Activated CD4-positive, alpha-beta T cell treated with anti-CD3 and anti-CD28 coated beads for 36 hours (primary cell): ENCODE measurements at regions of chr7 and their contacts with region 1.

Region 1: DNA sequence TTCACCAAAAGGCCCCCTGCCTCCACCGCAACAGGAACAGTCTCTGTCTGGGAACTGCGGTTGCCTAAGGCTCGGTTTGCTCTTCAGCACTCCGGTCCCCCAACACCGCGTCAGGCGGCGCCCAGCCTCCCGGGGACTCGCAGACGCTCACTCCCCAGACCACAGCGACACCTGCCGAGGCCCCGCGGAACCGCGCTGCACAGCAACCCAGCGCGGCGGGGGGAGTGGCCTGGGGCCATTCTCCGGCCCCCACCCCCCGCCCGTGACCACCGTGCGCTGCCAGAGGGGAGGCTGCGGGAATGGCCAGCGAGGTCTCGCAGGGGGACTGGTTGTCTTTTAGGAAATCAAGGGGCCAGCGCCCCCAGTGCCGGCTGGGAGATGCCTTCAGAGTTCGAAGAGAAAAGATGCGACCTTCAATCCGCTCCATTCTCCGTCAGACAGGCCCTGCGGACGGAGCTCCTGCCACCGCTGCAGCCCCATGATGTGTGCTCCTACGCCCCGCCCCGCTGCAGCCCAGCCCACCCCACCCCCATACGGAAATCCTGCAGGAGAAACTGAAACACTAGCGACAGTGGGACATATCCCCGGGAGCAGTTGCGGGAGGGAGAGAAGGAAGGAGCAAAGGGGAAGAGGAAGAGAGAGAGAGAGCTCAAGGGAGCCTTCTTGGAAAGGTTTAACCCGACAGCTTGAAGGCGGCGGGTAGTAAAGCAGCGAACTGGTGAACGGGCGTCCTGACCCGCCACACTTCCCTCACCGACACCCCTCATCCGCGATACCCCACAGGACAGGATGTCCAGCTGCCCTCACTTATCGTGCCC is 137.4 kb upstream of the CDCA7L start:
- DNase-seq: peak; percentile 91
- ATAC-seq: peak; percentile 99
- H3K4me3 Mint-ChIP-seq: peak overlapping the region; percentile 71
- H3K27ac Mint-ChIP-seq: no peak overlapping the region
- H3K4me1 Mint-ChIP-seq: peaks cover 10% of the 10 kb centered on the region
- H3K27me3 Mint-ChIP-seq: peaks cover 11% of the 10 kb centered on the region

Region 2: DNA sequence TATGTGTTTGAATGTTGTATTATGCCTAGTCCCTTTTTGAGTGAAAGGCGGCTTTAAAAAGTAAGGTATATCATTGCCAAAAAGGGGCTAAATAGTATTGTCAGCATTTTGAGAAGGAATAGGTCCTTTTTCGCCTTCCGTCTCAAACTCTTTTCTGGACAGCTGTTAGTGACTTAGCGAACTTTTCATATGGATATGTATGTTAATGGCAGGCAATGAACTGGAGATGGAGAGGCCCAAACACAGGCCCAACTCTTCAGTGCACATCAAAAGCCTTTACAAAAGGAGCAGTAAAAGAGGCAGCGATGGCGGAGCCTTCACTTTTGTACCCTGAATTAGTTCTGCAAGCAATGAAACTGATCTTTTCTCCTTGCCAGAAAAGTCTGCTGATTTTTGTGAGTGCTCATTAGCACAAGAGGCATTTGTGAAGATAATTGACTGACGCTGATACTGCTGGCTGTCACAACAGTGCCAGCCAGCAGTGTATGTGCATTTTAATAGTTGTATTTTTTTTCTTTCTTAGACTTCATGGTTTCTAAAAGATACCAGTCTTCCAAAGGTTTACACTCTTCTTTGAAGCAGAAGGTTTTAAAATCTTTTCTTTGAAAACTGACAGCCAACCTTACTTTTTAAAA is 1052.7 kb before region 1 on chr7:
- CTCF ChIA-PET with region 1: no interaction called
- POLR2A ChIA-PET with region 1: no interaction called
- intact Hi-C with region 1: no loop called
- DNase-seq: no peak
- ATAC-seq: no peak
- H3K4me3 Mint-ChIP-seq: no peak overlapping the region
- H3K27ac Mint-ChIP-seq: no peak overlapping the region
- H3K4me1 Mint-ChIP-seq: no peaks in the 10 kb centered on the region
- H3K27me3 Mint-ChIP-seq: no peaks in the 10 kb centered on the region

Region 3: DNA sequence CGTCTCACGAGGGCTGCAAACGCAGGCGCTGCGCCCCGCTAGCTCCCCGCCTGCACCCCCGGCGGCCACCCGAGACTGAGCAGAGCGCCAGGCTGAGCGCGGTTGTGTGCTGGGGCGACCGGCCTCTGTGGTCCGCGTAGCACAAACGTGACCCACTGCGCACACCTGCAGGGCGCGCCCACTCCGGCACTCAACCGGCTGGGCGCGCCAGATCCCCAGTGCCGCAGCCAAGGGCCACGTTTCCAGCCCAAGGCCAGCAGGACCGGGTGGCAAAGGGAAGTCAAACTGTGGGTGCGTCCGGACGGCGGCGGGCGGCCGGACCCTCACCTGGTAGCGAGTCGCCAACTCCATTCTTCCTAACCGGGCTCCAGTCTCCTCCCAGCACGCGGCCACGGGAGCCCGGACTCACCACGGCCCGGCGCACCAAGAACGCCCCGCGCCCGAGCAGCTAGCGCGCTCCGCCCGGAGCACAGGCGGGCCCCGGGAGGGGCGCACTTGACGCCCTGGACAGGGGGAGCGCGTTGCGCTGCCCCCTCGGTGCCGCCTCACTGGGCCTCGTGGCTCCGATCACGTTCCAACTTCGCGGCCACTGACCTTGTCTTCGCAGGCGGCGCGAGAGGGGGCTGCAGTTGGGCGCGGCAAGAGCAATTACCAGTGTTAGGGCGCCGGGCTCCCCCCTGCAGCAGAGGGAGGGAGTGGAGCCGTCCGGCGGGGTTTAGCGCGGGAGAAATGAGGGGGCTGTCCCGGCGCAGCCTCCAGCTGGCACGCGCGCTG is 137.5 kb before region 1 on chr7 and contains the start of gene CDCA7L:
- CTCF ChIA-PET with region 1: interaction called, 4 read pairs
- POLR2A ChIA-PET with region 1: no interaction called
- intact Hi-C with region 1: loop called in 1 of 2 experiments (anchors 1 kb)
- DNase-seq: peak; percentile 89
- ATAC-seq: peak; percentile 87
- H3K4me3 Mint-ChIP-seq: peak within 1 kb of the TSS; percentile 82
- H3K27ac Mint-ChIP-seq: peak within 1 kb of the TSS; percentile 85
- H3K4me1 Mint-ChIP-seq: peaks cover 60% of the 10 kb centered on the region
- H3K27me3 Mint-ChIP-seq: peaks cover 4% of the 10 kb centered on the region
- total RNA-seq, gene CDCA7L: 86.9 to 92.1 TPM

Region 4: GRCh38 chr7:21966271-21966670 is 116.8 kb before region 1 on chr7:
- CTCF ChIA-PET with region 1: no interaction called
- POLR2A ChIA-PET with region 1: no interaction called
- intact Hi-C with region 1: no loop called
- DNase-seq: no peak
- ATAC-seq: no peak
- H3K4me3 Mint-ChIP-seq: no peak overlapping the region
- H3K27ac Mint-ChIP-seq: no peak overlapping the region
- H3K4me1 Mint-ChIP-seq: peaks cover 10% of the 10 kb centered on the region
- H3K27me3 Mint-ChIP-seq: no peaks in the 10 kb centered on the region

Region 5: DNA sequence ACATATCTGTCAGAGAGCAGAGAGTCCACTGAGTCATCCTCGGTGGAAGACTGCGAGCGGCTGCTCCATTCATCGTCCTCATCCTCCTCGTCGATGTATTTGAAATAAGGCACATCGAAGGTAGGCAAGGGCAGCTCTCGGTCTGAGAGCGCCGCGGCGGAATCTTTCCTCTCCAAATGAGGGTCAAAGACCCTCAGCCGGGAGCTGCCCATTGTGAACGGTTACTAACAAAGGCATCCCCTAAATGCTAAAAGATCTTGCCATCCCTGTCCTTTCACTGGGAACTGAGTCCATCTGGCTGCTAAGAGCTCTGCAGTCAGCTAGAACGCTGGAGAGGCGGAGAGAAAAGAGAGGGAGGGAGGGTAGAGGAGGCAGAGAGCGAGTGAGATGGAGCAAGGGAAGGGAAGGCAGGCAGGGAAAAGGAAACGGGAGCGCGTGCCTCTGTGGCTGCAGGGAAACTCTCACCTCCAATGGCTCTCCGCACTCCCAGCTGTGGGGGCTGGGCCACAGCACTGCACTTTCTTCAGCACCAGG is 110.4 kb after region 1 on chr7:
- CTCF ChIA-PET with region 1: no interaction called
- POLR2A ChIA-PET with region 1: no interaction called
- intact Hi-C with region 1: no loop called
- DNase-seq: no peak
- ATAC-seq: no peak
- H3K4me3 Mint-ChIP-seq: no peak overlapping the region
- H3K27ac Mint-ChIP-seq: no peak overlapping the region
- H3K4me1 Mint-ChIP-seq: no peaks in the 10 kb centered on the region
- H3K27me3 Mint-ChIP-seq: peaks cover 2% of the 10 kb centered on the region

Region 6: GRCh38 chr7:22319424-22320403 is 236.6 kb after region 1 on chr7:
- CTCF ChIA-PET with region 1: no interaction called
- POLR2A ChIA-PET with region 1: no interaction called
- intact Hi-C with region 1: no loop called
- DNase-seq: no peak
- ATAC-seq: no peak
- H3K4me3 Mint-ChIP-seq: no peak overlapping the region
- H3K27ac Mint-ChIP-seq: no peak overlapping the region
- H3K4me1 Mint-ChIP-seq: no peaks in the 10 kb centered on the region
- H3K27me3 Mint-ChIP-seq: peaks cover 5% of the 10 kb centered on the region